AG04450 (cell line): ENCODE measurements at regions of chr16 and their contacts with region 1.

Region 1: DNA sequence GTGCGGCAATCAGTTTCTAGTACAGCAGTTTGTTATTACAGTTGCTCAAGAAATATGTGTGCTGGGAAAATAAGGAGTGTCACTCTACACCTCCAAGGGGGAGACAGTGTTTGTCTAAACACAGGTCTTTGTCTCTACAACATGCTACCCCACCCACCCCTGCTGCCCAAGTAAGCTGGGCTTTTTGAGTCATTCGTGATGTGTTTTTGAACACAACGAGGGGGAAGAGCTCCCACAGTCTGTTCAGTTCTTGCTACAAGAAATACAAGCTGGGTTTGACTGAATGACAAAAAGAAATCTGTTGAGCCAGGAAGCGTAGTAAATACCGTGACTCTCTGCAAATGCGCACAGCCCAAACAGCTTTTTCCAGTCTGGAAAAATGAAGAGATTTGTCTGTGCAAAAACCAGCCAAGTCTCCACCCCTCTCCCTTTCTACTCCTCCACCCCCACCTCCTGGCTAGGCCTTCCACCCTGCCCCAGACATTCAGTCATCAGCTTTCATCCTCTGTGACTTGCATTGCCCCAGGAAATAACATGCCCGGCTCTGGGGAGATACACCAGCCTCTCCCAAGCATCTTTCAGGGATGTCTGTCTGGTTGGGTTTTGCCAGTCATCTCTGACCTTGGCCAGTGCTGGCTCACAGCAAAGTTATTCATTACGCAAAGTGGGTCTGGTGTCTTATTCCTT is 25.7 kb downstream of the CHD9 start:
- DNase-seq: peak; percentile 65
- H3K4me3 ChIP-seq: peak overlapping the region; percentile 31
- H3K27ac ChIP-seq: peak overlapping the region; percentile 95
- H3K27me3 ChIP-seq: no peaks in the 10 kb centered on the region
- CTCF ChIP-seq: no peak

Region 2: GRCh38 chr16:52408191-52408845 is 672.2 kb before region 1 on chr16:
- CTCF ChIA-PET with region 1: no interaction called
- POLR2A ChIA-PET with region 1: no interaction called
- DNase-seq: no peak
- H3K4me3 ChIP-seq: no peak overlapping the region
- H3K27ac ChIP-seq: no peak overlapping the region
- H3K27me3 ChIP-seq: no peaks in the 10 kb centered on the region
- CTCF ChIP-seq: no peak

Region 3: DNA sequence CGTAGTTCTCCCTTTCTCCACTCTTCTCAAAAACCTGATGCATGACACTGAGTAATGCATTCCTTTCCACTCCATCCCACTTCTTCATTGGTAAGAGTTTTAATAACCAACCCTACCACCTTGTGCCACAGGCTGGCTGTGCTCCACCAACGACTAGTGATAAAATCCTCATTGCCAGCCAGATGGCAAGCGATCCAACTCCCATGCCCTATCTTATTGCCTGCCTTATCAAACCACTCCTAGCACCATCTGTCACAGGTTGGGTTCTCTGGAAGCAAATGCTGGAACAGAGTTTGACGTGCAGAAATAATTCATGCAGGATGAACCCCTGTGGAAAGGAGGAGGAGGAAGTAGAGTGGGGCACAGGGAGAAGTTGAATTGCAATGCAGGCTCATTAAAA is 127.3 kb before region 1 on chr16:
- CTCF ChIA-PET with region 1: no interaction called
- POLR2A ChIA-PET with region 1: no interaction called
- DNase-seq: no peak
- H3K4me3 ChIP-seq: no peak overlapping the region
- H3K27ac ChIP-seq: no peak overlapping the region
- H3K27me3 ChIP-seq: no peaks in the 10 kb centered on the region
- CTCF ChIP-seq: no peak

Region 4: DNA sequence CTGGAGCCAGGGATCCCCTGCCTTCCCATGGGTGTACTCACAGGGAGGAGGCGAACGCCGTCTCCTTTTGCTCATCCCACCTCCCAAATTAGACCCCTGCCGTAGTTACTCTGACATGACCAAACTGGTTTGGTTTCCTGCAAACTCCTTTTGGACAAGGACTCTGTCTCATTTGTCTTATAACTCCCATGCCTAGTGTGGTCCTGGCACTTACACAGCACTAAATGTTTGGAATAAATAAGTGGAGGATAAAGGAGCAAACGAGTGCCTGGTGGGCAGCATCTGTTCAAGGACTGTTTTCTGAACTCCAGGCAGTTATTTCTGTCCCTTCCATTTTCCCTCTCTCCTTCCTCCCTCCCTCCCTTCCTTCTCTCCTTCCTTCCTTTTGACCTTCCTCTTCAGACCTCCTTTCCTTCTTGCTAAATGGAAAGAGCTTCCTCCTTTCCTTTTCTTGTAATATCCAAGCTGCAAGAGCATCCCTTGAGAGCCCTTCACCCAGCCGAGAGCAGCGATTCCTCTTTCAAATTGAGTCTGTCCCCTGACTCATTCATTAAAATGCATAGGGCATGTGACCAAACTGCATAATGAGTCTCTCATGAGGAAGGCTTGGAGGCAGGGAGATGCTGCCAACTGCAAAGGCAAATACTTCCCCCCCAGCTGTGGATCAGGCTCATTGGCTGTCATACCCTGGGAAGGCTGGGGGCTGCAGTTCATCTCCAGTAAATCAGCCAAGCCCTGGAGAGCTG is 11.2 kb after region 1 on chr16:
- CTCF ChIA-PET with region 1: interaction called, 4 read pairs
- POLR2A ChIA-PET with region 1: interaction called, 22 read pairs
- DNase-seq: peak; percentile 71
- H3K4me3 ChIP-seq: peak overlapping the region; percentile 26
- H3K27ac ChIP-seq: peak overlapping the region; percentile 95
- H3K27me3 ChIP-seq: no peaks in the 10 kb centered on the region
- CTCF ChIP-seq: no peak

Region 5: DNA sequence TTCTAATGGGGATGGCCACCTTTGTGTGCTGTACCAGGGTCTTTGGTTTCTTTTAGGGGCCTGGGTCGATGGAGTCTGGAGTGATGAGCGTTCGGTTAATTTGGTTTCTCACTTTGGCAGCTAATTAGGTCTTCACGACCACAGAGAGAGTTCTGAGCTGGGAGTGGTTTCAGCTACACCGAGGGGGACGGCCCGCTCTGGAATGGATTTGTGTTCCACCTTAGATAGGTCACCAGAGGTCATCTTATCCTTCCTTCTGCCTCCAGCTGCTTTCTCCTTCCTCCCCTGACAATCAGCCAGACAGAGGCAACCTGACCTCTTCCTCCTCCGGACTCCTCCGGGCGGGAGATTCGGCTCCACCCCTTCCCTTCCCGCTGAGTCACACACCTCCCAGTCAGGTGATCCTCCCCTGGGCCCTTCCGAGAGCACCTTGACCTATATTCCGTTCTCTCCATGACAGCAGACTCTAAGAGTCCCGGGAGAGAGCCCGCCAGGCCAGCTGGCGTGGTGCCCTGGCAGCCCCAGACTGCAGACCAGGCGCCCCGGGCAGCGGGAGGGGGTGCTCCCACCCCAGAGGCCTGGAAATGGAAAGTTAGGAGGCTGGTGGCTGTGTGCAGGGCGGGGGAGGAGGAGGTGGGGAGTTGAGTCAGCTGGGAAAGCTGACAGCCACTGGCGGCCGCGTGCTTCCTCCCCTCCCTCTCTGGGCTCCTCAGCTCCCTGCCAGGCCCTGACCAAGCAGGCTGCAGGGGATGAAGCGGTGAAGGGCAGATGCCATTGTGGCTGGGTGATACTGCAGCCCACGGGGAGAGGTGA is 19.0 kb after region 1 on chr16:
- CTCF ChIA-PET with region 1: interaction called, 4 read pairs
- POLR2A ChIA-PET with region 1: interaction called, 11 read pairs
- DNase-seq: no peak
- H3K4me3 ChIP-seq: peak overlapping the region; percentile 51
- H3K27ac ChIP-seq: peak overlapping the region; percentile 97
- H3K27me3 ChIP-seq: no peaks in the 10 kb centered on the region
- CTCF ChIP-seq: no peak